CD8-positive, alpha-beta T cell (primary cell): ENCODE measurements at regions of chr2 and their contacts with region 1.

Region 1: GRCh38 chr2:16899958-16900357 is 234.3 kb upstream of the CYRIA start:
- DNase-seq: no peak
- ATAC-seq: no peak
- H3K4me3 ChIP-seq: no peak overlapping the region
- H3K4me3 Mint-ChIP-seq: no peak overlapping the region
- H3K27ac ChIP-seq: no peak overlapping the region
- H3K27ac Mint-ChIP-seq: no peak overlapping the region
- H3K4me1 ChIP-seq: no peaks in the 10 kb centered on the region
- H3K4me1 Mint-ChIP-seq: no peaks in the 10 kb centered on the region
- H3K27me3 ChIP-seq: no peaks in the 10 kb centered on the region
- H3K27me3 Mint-ChIP-seq: no peaks in the 10 kb centered on the region
- CTCF ChIP-seq: no peak

Region 2: DNA sequence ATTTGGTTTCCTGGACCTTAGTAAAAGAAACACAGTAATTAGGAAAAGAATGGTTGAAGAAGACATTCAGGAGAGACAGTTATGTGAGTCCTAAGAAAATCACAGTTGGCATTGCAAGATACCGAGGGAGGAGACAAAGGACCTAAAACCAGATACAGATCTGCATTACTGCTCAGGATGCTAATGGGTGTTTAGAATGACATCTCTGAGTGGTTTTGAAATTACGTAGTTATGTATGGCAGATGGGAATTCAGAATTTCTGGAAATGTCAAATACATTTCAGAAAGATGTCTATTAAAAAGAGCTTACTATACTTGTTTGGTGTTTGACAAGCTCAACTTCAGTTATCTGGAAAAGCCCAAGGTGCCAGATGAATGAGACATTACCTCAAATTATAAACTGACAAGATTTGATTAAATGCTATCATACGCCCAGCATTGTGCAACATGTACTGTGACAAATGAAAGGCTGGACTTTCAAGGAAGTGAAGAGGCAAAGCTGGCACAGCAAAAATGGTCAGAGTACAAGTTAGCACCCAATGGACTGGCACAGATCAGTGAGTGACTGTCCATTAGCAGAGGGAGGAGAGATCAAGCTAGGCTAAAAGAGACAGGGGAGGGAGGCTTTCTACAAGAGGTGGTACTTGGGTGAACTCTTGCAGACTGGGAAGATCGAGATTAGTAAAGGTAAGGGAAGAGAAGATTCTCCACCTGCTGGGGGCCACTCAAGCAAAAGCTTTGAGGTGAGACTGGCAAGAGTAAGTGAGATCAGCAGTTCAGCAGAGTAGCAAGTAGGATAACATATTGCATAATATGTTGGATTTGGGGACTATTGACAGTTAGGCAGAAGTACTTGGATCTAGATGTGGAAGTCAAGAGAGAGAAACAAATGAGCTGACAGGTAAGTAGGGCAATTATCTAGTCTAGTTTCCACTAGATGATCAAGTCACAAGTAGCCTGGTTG is 403.3 kb before region 1 on chr2:
- CTCF ChIA-PET with region 1: no interaction called
- POLR2A ChIA-PET with region 1: no interaction called
- intact Hi-C with region 1: loop called in 1 of 2 experiments (anchors 5 kb)
- DNase-seq: no peak
- ATAC-seq: no peak
- H3K4me3 ChIP-seq: no peak overlapping the region
- H3K4me3 Mint-ChIP-seq: no peak overlapping the region
- H3K27ac ChIP-seq: no peak overlapping the region
- H3K27ac Mint-ChIP-seq: no peak overlapping the region
- H3K4me1 ChIP-seq: no peaks in the 10 kb centered on the region
- H3K4me1 Mint-ChIP-seq: no peaks in the 10 kb centered on the region
- H3K27me3 ChIP-seq: no peaks in the 10 kb centered on the region
- H3K27me3 Mint-ChIP-seq: peaks cover 3% of the 10 kb centered on the region
- CTCF ChIP-seq: no peak